ENCODE measurements at regions of chr2 and their contacts with region 1.

Region 1: DNA sequence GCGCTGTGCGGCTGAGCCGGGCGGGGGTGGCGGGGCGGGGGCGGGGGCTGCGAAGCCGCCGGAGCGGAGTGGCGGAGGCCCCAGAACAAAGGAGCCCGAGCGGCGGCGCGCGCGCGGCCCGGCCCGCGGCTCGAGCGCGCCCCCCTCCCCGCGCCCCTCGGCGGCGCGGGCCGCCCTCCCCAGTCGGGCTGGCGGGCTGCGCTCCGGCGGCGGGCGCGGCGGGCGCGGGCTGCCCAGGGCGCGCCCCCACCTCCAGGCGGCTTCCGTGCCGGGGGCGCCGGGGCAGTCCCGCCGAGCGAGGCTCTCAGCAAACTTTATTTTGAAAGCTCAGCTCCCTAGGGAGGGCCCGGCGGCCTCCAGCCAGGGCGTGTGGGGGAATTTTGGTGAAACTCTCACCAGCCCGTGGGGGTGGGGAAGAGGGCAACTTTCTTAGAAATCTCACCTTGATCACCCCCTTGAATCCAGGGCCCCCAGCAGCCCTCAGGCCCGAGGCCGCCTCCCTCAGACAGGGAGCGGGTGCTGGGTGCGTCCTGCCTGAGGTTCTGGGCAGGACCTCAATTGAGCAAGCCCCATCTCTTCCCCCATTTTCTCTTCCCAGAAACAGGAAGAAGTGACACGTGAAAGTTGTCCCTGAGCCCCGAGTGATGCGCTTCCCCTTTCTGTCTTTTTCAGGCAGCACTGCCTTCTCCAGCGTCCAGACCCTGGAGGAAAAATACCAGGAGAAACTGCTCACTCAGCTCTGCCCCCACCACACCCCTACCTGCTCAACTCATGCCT is 786 bp downstream of the TET3 start:
- DNase-seq: peak in 8 of 9 donors; percentile 43 to 78 (median 52)
- ATAC-seq: peak; percentile 63
- H3K4me3 ChIP-seq: peak overlapping the region; percentile 62
- H3K4me3 Mint-ChIP-seq: peak overlapping the region; percentile 83 to 93 (median 88)
- H3K27ac ChIP-seq: peak overlapping the region; percentile 90
- H3K27ac Mint-ChIP-seq: peak overlapping the region; percentile 66 to 94 (median 87)
- H3K4me1 ChIP-seq: peaks cover 40 to 63% of the 10 kb centered on the region in 2 donors
- H3K4me1 Mint-ChIP-seq: peaks cover 64 to 85% (median 81%) of the 10 kb centered on the region in 7 donors
- H3K27me3 ChIP-seq: no peaks in the 10 kb centered on the region
- H3K27me3 Mint-ChIP-seq: peaks cover 0 to 28% (median 0%) of the 10 kb centered on the region in 5 donors

Region 2: DNA sequence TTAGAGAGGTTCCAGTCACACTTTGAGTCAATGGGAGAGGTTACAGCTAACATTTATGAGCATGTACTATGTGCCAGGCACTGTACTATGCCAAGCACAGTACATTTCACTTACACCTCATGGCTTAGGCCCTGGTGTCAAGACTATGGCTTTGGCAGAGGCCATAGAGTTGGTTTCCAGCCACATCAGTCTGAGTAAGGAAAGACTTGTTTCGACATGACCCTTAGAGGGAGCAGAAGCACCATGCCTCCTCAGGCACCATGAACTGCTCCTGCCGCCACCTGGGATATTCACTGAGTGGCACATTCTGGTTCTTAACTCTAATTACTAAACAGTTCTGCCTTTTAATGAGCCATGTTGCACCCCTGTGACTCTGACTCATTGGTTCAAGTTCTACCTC is 46.1 kb before region 1 on chr2:
- CTCF ChIA-PET with region 1: interaction called, 7 read pairs
- POLR2A ChIA-PET with region 1: interaction called, 5 read pairs
- intact Hi-C with region 1: loop called in 1 of 2 experiments (anchors 1 kb)
- DNase-seq: peak in 7 of 9 donors; percentile 33 to 59 (median 46)
- ATAC-seq: peak; percentile 78
- H3K4me3 ChIP-seq: no peak overlapping the region
- H3K4me3 Mint-ChIP-seq: peak overlapping the region in 8 of 10 donors; percentile 8 to 39 (median 29)
- H3K27ac ChIP-seq: no peak overlapping the region
- H3K27ac Mint-ChIP-seq: peak overlapping the region in 7 of 9 donors; percentile 40 to 81 (median 59)
- H3K4me1 ChIP-seq: peaks cover 17 to 20% of the 10 kb centered on the region in 2 donors
- H3K4me1 Mint-ChIP-seq: peaks cover 50 to 91% (median 80%) of the 10 kb centered on the region in 7 donors
- H3K27me3 ChIP-seq: no peaks in the 10 kb centered on the region
- H3K27me3 Mint-ChIP-seq: no peaks in the 10 kb centered on the region

Region 3: GRCh38 chr2:73970850-73971471 is 14.5 kb before region 1 on chr2:
- CTCF ChIA-PET with region 1: interaction called, 10 read pairs
- POLR2A ChIA-PET with region 1: interaction called, 19 read pairs
- intact Hi-C with region 1: loop called (anchors 1 to 2 kb)
- DNase-seq: peak in 7 of 9 donors; percentile 60 to 84 (median 72)
- ATAC-seq: peak; percentile 90
- H3K4me3 ChIP-seq: peak overlapping the region; percentile 36
- H3K4me3 Mint-ChIP-seq: peak overlapping the region; percentile 75 to 88 (median 81)
- H3K27ac ChIP-seq: peak overlapping the region; percentile 62
- H3K27ac Mint-ChIP-seq: peak overlapping the region; percentile 84 to 99 (median 93)
- H3K4me1 ChIP-seq: peaks cover 25 to 44% of the 10 kb centered on the region in 2 donors
- H3K4me1 Mint-ChIP-seq: peaks cover 48 to 88% (median 82%) of the 10 kb centered on the region in 7 donors
- H3K27me3 ChIP-seq: no peaks in the 10 kb centered on the region
- H3K27me3 Mint-ChIP-seq: no peaks in the 10 kb centered on the region

Region 4: DNA sequence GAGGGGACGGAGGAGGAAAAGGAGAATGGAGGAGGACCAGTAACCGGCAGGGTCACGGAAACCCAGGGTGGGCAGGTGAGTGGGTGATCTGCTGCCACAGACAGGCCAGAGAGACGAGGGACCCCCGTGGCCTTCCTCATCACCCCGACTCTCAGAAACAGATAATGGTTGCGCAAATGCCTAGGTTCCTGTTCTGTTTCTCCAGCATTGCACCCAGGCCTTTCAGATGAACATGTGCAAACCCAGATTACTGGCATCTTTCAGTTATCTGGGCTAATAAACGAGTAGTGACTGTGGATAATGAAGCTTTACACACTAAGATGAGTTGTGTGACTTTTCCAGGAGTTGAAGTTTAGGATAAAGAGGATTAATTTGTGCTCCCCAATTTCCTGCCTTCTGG is 45.7 kb after region 1 on chr2:
- CTCF ChIA-PET with region 1: interaction called, 4 read pairs
- POLR2A ChIA-PET with region 1: interaction called, 4 read pairs
- intact Hi-C with region 1: loop called (anchors 2 to 5 kb)
- DNase-seq: no peak
- ATAC-seq: no peak
- H3K4me3 ChIP-seq: no peak overlapping the region
- H3K4me3 Mint-ChIP-seq: peak overlapping the region in 9 of 10 donors; percentile 33 to 99 (median 83)
- H3K27ac ChIP-seq: no peak overlapping the region
- H3K27ac Mint-ChIP-seq: peak overlapping the region in 8 of 9 donors; percentile 40 to 97 (median 88)
- H3K4me1 ChIP-seq: peaks cover 32 to 62% of the 10 kb centered on the region in 2 donors
- H3K4me1 Mint-ChIP-seq: peaks cover 49 to 88% (median 78%) of the 10 kb centered on the region in 7 donors
- H3K27me3 ChIP-seq: no peaks in the 10 kb centered on the region
- H3K27me3 Mint-ChIP-seq: no peaks in the 10 kb centered on the region

Region 5: GRCh38 chr2:74080346-74080745 is 94.8 kb after region 1 on chr2:
- CTCF ChIA-PET with region 1: no interaction called
- POLR2A ChIA-PET with region 1: no interaction called
- intact Hi-C with region 1: no loop called
- DNase-seq: peak in 1 of 9 donors; percentile 3
- ATAC-seq: peak; percentile 52
- H3K4me3 ChIP-seq: no peak overlapping the region
- H3K4me3 Mint-ChIP-seq: no peak overlapping the region
- H3K27ac ChIP-seq: no peak overlapping the region
- H3K27ac Mint-ChIP-seq: peak overlapping the region in 1 of 9 donors; percentile 38
- H3K4me1 ChIP-seq: no peaks in the 10 kb centered on the region
- H3K4me1 Mint-ChIP-seq: peaks cover 0 to 17% (median 4%) of the 10 kb centered on the region in 7 donors
- H3K27me3 ChIP-seq: no peaks in the 10 kb centered on the region
- H3K27me3 Mint-ChIP-seq: no peaks in the 10 kb centered on the region

Region 6: DNA sequence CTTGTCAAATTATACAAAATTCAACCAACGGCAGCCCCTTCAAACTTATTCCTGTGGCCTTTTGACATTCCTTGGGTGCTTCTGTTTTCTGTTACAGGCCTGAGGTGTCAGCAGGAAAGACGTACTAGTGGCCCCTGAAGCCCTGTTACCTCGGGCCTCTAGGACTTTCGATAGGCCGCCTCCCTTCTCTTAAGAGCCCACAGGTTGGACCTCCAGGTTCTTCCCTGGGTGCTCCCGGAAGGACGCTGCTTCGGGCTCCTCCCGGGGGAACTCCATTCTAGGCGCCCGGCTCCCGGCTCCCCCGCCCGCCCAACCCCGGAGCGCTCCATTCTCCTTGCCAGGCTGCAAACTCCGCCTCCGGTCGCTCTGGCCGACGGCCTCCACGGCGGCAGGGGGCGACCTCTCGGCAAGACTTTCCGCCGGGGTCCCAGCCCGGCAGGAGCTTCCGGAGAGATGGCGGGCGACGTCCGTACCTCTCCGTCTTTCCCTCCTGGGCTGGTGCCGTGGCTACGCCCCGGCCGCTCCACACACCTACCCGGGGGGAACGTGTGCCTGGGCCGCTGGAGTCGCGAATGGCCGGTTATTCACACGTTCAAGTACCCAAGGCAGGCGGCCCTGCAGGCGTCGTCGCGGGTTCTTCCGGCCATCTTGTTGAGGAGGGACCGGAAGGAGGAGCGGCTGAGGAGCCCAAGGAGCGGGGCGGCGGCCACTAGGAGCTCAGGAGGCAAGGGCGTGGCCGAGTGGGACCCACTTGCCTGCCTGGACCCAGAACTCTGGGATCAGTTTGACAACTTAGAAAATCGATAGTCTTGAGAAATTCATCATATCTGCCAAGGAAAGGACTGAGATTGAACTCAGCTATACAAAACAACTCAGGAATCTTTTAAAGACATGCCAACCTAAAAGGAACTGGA is 134.7 kb after region 1 on chr2:
- CTCF ChIA-PET with region 1: interaction called, 3 read pairs
- POLR2A ChIA-PET with region 1: interaction called, 4 read pairs
- intact Hi-C with region 1: loop called in 1 of 2 experiments (anchors 1 kb)
- DNase-seq: peak; percentile 69 to 91 (median 80)
- ATAC-seq: peak; percentile 98
- H3K4me3 ChIP-seq: peak overlapping the region; percentile 89
- H3K4me3 Mint-ChIP-seq: peak overlapping the region; percentile 82 to 92 (median 88)
- H3K27ac ChIP-seq: peak overlapping the region; percentile 83
- H3K27ac Mint-ChIP-seq: peak overlapping the region; percentile 79 to 96 (median 91)
- H3K4me1 ChIP-seq: no peaks in the 10 kb centered on the region
- H3K4me1 Mint-ChIP-seq: peaks cover 8 to 12% (median 9%) of the 10 kb centered on the region in 7 donors
- H3K27me3 ChIP-seq: no peaks in the 10 kb centered on the region
- H3K27me3 Mint-ChIP-seq: peaks cover 0 to 5% (median 2%) of the 10 kb centered on the region in 5 donors

Region 7: DNA sequence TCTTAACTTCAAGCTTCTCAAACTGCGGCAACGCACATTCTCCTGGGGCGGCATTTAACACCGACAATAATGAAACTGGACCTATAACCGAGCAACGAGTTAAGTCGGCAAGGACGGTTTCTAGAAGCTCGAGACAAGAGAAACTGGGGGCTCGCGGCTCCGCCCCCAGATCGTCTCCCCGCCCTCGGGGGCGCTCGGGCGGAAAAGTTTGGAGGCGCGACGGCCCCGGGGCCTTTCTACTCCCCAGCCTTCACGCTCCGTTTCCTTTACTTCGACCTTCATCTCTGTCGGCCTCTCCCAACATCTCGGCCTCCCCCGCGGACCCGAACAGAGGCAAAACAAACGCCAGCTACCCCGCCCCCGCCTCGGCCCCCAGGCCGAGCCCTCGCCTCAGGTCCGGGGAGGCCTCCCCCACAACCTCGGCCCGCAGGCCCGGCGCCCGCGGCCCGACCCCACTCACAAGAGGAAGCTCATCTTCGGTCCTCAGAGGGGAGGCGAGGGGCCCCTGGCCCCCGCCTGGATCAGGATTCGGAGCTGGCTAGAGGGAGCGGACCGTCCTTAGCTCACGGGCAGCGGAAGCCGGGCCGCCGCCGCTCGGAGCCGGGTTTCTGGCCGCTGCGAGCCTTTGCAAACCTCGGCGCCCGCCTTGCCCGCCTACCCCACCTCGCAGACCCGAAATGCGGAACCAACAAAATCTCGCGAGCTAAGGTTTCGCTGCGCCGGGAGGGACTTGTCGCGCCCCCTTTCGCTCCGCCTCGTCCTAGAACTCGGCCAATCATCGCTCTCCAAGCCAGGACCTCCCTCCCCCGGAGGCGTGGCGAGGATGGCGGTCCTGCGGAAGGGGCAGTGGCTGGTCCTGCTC is 192.9 kb after region 1 on chr2 and contains the start of gene MOB1A:
- CTCF ChIA-PET with region 1: interaction called, 3 read pairs
- POLR2A ChIA-PET with region 1: no interaction called
- intact Hi-C with region 1: loop called in 1 of 2 experiments (anchors 1 kb)
- DNase-seq: peak; percentile 94 to 98 (median 97)
- ATAC-seq: peak; percentile 97
- H3K4me3 ChIP-seq: peak within 1 kb of the TSS; percentile 89
- H3K4me3 Mint-ChIP-seq: peak within 1 kb of the TSS; percentile 86 to 95 (median 91)
- H3K27ac ChIP-seq: peak within 1 kb of the TSS; percentile 97
- H3K27ac Mint-ChIP-seq: peak within 1 kb of the TSS; percentile 82 to 95 (median 90)
- H3K4me1 ChIP-seq: peaks cover 25 to 37% of the 10 kb centered on the region in 2 donors
- H3K4me1 Mint-ChIP-seq: peaks cover 32 to 46% (median 35%) of the 10 kb centered on the region in 7 donors
- H3K27me3 ChIP-seq: no peaks in the 10 kb centered on the region
- H3K27me3 Mint-ChIP-seq: no peaks in the 10 kb centered on the region
- total RNA-seq, gene MOB1A: 113 to 185 (median 140) TPM

Region 8: GRCh38 chr2:74391580-74392448 is 406.3 kb after region 1 on chr2:
- CTCF ChIA-PET with region 1: no interaction called
- POLR2A ChIA-PET with region 1: no interaction called
- intact Hi-C with region 1: loop called in 1 of 2 experiments (anchors 5 kb)
- DNase-seq: peak; percentile 89 to 99 (median 93)
- ATAC-seq: peak; percentile 97
- H3K4me3 ChIP-seq: peak overlapping the region; percentile 78
- H3K4me3 Mint-ChIP-seq: peak overlapping the region in 4 of 10 donors; percentile 40 to 100 (median 92)
- H3K27ac ChIP-seq: peak overlapping the region; percentile 91
- H3K27ac Mint-ChIP-seq: peak overlapping the region in 8 of 9 donors; percentile 98 to 100 (median 99)
- H3K4me1 ChIP-seq: peaks cover 8 to 25% of the 10 kb centered on the region in 2 donors
- H3K4me1 Mint-ChIP-seq: peaks cover 0 to 15% (median 5%) of the 10 kb centered on the region in 7 donors
- H3K27me3 ChIP-seq: no peaks in the 10 kb centered on the region
- H3K27me3 Mint-ChIP-seq: peaks cover 0 to 14% (median 5%) of the 10 kb centered on the region in 5 donors